ENCODE measurements at regions of chr4 and their contacts with region 1.

Region 1: DNA sequence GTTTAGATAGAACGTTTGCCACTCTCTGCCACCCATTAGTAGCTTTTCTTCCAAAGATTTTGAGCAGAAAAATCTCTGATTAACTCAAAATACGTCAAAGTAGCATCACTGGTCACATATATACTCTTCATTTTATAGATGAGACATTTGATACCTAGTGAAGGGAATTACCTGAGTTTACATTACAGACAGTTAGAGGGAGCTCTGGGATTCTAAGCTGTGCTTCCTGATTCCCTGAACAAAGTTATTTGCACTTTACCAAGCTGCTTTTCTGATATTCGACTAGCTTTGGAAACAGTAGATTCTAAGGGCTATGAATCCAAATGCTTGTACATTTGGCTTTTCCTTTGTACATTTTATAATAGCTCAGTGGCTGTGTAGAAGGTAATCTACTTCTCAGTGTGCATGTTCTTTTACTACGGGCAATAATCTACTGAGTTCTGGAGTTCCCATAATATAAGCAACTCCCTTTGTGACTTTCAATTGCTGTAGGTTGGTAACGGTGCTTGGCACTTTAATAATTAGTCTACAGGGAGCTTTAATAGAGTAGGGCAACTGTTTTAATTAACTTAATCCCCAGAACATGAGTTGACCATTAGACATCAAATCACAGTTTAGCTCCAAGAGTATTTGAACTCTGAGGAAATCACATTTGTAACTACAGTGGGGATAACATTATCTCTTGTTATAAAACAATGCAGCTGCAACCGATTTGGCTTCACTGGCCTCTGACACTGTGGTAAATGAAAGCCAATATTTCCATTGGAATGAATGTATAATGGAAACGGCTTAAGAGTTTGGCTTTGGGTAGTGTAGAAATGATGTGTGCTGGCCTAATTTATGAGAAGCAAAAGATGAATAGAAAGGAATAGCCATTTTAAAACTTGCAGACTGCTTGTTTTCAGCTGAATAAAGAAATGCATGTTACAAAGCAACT is 1602.4 kb downstream of the STIM2 start:
- DNase-seq: no peak
- ATAC-seq: no peak

Region 2: GRCh38 chr4:27886131-27886530 is 576.9 kb before region 1 on chr4:
- intact Hi-C with region 1: loop called (anchors 5 kb)
- DNase-seq: no peak
- ATAC-seq: no peak

Measured in sciatic nerve (tissue), 2 donors.